Activated CD4-positive, alpha-beta T cell treated with anti-CD3 and anti-CD28 coated beads for 36 hours (primary cell): ENCODE measurements at regions of chr16 and their contacts with region 1.

Region 1: DNA sequence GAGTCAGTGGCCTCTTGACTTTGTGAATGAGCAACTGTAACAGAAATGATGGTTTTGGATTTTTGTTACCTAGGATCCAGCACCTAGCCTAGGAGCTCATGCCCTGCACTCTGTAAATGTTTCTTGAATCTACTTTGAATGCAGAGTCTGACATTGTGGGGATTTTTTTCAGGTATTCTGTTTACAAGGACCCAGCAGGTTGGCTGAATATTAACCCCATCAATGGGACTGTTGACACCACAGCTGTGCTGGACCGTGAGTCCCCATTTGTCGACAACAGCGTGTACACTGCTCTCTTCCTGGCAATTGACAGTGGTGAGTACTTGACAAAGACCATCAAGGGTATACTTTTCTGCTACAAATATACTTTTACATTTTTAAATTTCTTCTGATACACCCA is 59.8 kb upstream of the HSBP1 start:
- DNase-seq: no peak
- ATAC-seq: no peak
- H3K4me3 Mint-ChIP-seq: no peak overlapping the region
- H3K27ac Mint-ChIP-seq: no peak overlapping the region
- H3K4me1 Mint-ChIP-seq: no peaks in the 10 kb centered on the region
- H3K27me3 Mint-ChIP-seq: peaks cover 24% of the 10 kb centered on the region

Region 2: DNA sequence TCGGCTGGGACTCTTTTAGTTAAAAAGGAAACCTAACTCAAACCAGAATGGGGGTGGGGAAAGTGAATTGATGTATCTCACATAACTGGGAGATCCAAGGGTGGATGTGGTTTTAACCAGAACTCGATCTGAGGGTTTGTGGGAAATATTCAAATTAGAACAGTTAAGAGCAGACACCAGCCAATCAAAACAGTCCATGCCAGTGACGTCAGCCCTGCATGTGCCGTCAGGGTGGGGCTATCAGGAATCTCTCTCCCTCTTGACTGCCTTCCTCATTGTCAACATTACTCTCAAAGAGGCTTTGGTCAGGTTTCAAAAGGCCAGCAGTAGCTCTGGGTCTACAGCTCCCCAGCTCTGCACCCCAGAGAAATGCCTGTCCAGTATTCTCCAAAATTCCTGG is 34.3 kb before region 1 on chr16:
- CTCF ChIA-PET with region 1: no interaction called
- POLR2A ChIA-PET with region 1: no interaction called
- intact Hi-C with region 1: no loop called
- DNase-seq: no peak
- ATAC-seq: no peak
- H3K4me3 Mint-ChIP-seq: no peak overlapping the region
- H3K27ac Mint-ChIP-seq: no peak overlapping the region
- H3K4me1 Mint-ChIP-seq: no peaks in the 10 kb centered on the region
- H3K27me3 Mint-ChIP-seq: no peaks in the 10 kb centered on the region

Region 3: DNA sequence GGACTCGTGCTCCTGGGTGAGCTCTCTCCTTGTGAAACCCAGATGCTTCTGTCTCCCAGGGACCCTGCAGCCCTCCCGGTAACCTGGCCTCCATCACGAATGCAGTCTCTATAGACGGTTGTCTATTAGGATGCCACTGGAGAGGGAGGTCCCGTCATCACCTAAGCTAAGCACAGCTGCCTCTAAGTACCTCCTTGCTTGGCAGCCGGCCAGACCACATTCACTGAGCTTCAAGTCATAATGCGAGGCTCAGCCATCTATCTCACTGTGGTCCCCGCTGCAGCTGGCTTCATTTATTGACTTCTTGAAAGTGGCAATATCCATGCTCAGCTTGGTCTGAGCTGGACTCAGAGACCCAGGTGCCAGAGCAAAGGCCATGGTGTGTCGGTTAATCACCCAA is 14.6 kb before region 1 on chr16:
- CTCF ChIA-PET with region 1: interaction called, 3 read pairs
- POLR2A ChIA-PET with region 1: no interaction called
- intact Hi-C with region 1: loop called in 1 of 2 experiments (anchors 2 kb)
- DNase-seq: no peak
- ATAC-seq: no peak
- H3K4me3 Mint-ChIP-seq: no peak overlapping the region
- H3K27ac Mint-ChIP-seq: no peak overlapping the region
- H3K4me1 Mint-ChIP-seq: no peaks in the 10 kb centered on the region
- H3K27me3 Mint-ChIP-seq: peaks cover 9% of the 10 kb centered on the region

Region 4: GRCh38 chr16:84699712-84700445 is 951.9 kb after region 1 on chr16 and contains the start of gene USP10:
- CTCF ChIA-PET with region 1: no interaction called
- POLR2A ChIA-PET with region 1: no interaction called
- intact Hi-C with region 1: no loop called
- DNase-seq: peak; percentile 90
- ATAC-seq: peak; percentile 83
- H3K4me3 Mint-ChIP-seq: peak within 1 kb of the TSS; percentile 89
- H3K27ac Mint-ChIP-seq: peak within 1 kb of the TSS; percentile 97
- H3K4me1 Mint-ChIP-seq: peaks cover 38% of the 10 kb centered on the region
- H3K27me3 Mint-ChIP-seq: no peaks in the 10 kb centered on the region
- total RNA-seq, gene USP10: 117 to 133 TPM